CD8-positive, alpha-beta memory T cell (primary cell): ENCODE measurements at regions of chr2 and their contacts with region 1.

Region 1: DNA sequence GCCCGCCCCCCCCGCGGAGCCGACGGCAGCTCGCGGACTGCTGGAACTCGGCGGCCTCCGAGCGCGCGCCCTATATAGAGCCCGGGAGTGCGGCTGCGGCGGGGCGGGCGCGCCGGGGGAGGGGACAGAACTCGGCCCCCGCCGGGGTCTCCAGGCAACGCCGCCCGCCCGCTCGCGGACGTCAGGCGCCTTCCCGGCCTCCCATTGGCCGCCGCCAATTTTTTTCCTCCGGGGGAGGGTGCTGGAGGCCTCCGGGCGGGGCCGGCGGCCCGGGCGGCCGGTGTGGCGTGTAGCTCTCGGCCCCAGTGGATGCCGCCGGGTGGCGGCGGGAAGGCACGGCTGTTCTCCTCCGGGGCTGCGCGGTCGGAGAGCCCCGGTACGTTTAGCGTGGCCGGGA is at the start of gene ZFP36L2:
- DNase-seq: peak; percentile 92 to 98 (median 97)
- H3K4me3 ChIP-seq: peak within 1 kb of the TSS; percentile 99
- H3K4me3 Mint-ChIP-seq: peak within 1 kb of the TSS; percentile 80 to 99 (median 98)
- H3K27ac ChIP-seq: peak within 1 kb of the TSS; percentile 97
- H3K27ac Mint-ChIP-seq: peak within 1 kb of the TSS; percentile 89 to 98 (median 96)
- H3K4me1 ChIP-seq: peaks cover 24% of the 10 kb centered on the region
- H3K4me1 Mint-ChIP-seq: peaks cover 28 to 32% (median 29%) of the 10 kb centered on the region in 3 donors
- H3K27me3 ChIP-seq: no peaks in the 10 kb centered on the region
- H3K27me3 Mint-ChIP-seq: peaks cover 0 to 36% of the 10 kb centered on the region in 2 donors
- total RNA-seq, gene ZFP36L2: 98.0 to 98.6 TPM

Region 2: DNA sequence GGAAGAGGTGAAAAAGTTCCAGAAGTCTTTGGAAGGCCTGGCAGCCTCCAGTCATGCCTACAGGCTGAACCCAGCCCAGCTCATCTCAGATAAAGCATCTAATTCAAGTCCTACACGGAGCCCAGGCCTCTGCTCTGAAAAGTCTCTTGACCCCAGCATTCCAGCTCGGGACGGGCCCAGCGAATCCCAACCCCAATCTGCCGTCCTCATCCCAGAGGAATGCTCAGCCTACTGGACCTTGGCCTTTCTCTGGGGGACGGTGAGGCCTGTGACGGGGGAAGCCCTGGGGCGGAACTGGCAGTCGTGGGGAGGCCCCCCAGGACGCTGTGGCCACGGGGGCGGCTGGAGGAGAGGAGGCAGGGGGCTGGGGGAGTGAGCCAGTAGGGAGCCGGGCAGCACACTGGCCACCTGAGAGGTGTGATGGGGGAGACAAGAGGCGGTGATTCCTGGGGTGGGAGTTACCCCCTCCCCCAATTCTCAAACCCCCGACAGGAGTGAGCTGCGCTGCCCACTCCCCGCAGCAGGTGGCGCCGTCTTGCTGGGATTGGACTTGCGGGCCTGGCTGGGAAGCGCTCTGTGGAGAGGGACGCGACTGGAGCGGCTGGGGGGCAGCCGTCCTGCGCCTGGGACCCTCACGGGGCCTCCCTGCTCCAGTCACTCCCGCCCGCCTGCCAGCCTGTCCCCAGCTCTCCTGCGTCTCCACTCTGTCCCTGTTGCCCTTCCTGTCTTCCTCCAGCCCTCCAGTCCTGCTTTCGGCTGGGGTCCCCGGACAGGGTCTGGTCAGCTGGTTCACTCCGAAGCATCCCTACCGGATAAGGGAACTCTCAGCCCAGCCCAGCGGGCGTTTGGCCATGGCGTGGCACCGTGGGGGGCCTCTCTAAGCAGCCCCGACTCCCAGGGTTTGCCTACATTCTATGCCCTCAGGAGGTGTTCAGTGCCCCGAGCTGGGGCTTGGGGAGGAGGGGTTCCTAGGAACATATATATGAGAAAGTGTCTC is 251.5 kb before region 1 on chr2:
- CTCF ChIA-PET with region 1: interaction called, 22 read pairs
- POLR2A ChIA-PET with region 1: no interaction called
- DNase-seq: peak; percentile 28 to 66 (median 34)
- H3K4me3 ChIP-seq: no peak overlapping the region
- H3K4me3 Mint-ChIP-seq: no peak overlapping the region
- H3K27ac ChIP-seq: no peak overlapping the region
- H3K27ac Mint-ChIP-seq: no peak overlapping the region
- H3K4me1 ChIP-seq: no peaks in the 10 kb centered on the region
- H3K4me1 Mint-ChIP-seq: peaks cover 7 to 18% (median 12%) of the 10 kb centered on the region in 3 donors
- H3K27me3 ChIP-seq: no peaks in the 10 kb centered on the region
- H3K27me3 Mint-ChIP-seq: peaks cover 0 to 3% of the 10 kb centered on the region in 2 donors

Region 3: GRCh38 chr2:43139996-43140621 is 86.4 kb before region 1 on chr2:
- CTCF ChIA-PET with region 1: interaction called, 820 read pairs
- POLR2A ChIA-PET with region 1: interaction called, 590 read pairs
- DNase-seq: peak in 3 of 5 donors; percentile 64 to 74 (median 71)
- H3K4me3 ChIP-seq: peak overlapping the region; percentile 19
- H3K4me3 Mint-ChIP-seq: peak overlapping the region; percentile 46 to 89 (median 69)
- H3K27ac ChIP-seq: peak overlapping the region; percentile 58
- H3K27ac Mint-ChIP-seq: peak overlapping the region; percentile 89 to 99 (median 98)
- H3K4me1 ChIP-seq: peaks cover 93% of the 10 kb centered on the region
- H3K4me1 Mint-ChIP-seq: peaks cover 61 to 80% (median 79%) of the 10 kb centered on the region in 3 donors
- H3K27me3 ChIP-seq: no peaks in the 10 kb centered on the region
- H3K27me3 Mint-ChIP-seq: peaks cover 0 to 4% of the 10 kb centered on the region in 2 donors

Region 4: GRCh38 chr2:43178602-43179542 is 47.7 kb before region 1 on chr2:
- CTCF ChIA-PET with region 1: interaction called, 580 read pairs
- POLR2A ChIA-PET with region 1: interaction called, 224 read pairs
- DNase-seq: no peak
- H3K4me3 ChIP-seq: no peak overlapping the region
- H3K4me3 Mint-ChIP-seq: peak overlapping the region in 2 of 7 donors; percentile 59 to 69
- H3K27ac ChIP-seq: peak overlapping the region; percentile 79
- H3K27ac Mint-ChIP-seq: peak overlapping the region; percentile 90 to 99 (median 92)
- H3K4me1 ChIP-seq: peaks cover 69% of the 10 kb centered on the region
- H3K4me1 Mint-ChIP-seq: peaks cover 69 to 77% (median 73%) of the 10 kb centered on the region in 3 donors
- H3K27me3 ChIP-seq: no peaks in the 10 kb centered on the region
- H3K27me3 Mint-ChIP-seq: peaks cover 0 to 4% of the 10 kb centered on the region in 2 donors

Region 5: DNA sequence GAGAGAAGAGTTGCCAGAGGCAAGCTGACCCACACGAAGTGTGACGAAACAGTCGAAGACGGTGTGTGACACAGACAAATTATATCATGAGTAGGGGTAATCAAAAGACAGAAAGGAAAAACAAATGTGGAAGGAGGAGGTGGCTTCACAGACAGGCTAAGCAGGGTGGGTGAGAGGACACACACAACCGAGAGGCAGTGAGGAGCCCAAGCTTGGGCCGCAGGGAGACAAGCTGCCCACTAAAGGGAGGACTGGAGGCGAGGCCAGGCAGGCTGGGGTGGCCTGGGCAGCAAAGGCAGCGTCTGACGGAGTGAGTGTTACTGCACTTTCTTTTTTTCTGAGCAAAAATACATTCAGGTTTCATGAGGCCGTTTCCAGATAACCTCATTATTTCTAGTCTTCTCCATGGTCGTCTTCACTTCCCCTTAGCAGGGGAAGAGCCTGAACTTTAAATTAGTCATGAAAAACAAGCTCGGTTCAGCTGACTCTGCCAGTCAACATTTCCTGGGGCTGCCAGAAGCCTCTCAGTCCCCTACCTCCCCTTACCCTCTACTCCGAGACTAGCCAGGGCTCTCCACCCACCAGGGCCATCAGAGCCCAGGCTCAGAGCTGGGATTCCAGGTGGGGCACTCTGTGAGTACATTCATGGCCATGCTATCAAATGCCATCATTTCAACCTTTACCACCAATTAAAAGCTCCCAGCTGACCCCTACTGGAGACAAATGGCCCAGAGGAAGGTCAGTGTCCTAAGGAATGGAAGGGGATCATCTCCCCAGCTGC is 13.6 kb after region 1 on chr2:
- CTCF ChIA-PET with region 1: interaction called, 10 read pairs
- POLR2A ChIA-PET with region 1: no interaction called
- DNase-seq: no peak
- H3K4me3 ChIP-seq: no peak overlapping the region
- H3K4me3 Mint-ChIP-seq: no peak overlapping the region
- H3K27ac ChIP-seq: no peak overlapping the region
- H3K27ac Mint-ChIP-seq: peak overlapping the region in 4 of 8 donors; percentile 0 to 77 (median 6)
- H3K4me1 ChIP-seq: no peaks in the 10 kb centered on the region
- H3K4me1 Mint-ChIP-seq: peaks cover 13 to 22% (median 13%) of the 10 kb centered on the region in 3 donors
- H3K27me3 ChIP-seq: no peaks in the 10 kb centered on the region
- H3K27me3 Mint-ChIP-seq: no peaks in the 10 kb centered on the region